Right cardiac atrium (tissue), 5 donors: ENCODE measurements at regions of chr16 and their contacts with region 1.

Region 1: GRCh38 chr16:8674413-8675022 is at the start of gene ABAT:
- DNase-seq: peak; percentile 91 to 97 (median 95)
- ATAC-seq: peak; percentile 100
- H3K4me3 ChIP-seq: peak within 1 kb of the TSS; percentile 79
- H3K27ac ChIP-seq: no peak within 1 kb of the TSS
- H3K4me1 ChIP-seq: no peaks in the 10 kb centered on the region
- H3K27me3 ChIP-seq: no peaks in the 10 kb centered on the region
- total RNA-seq, gene ABAT: 12.3 to 42.4 (median 20.2) TPM

Region 2: GRCh38 chr16:8768692-8769091 is 94.2 kb after region 1 on chr16:
- intact Hi-C with region 1: loop called in 1 of 4 experiments (anchors 10 kb)
- DNase-seq: no peak
- ATAC-seq: no peak
- H3K4me3 ChIP-seq: no peak overlapping the region
- H3K27ac ChIP-seq: no peak overlapping the region
- H3K4me1 ChIP-seq: no peaks in the 10 kb centered on the region
- H3K27me3 ChIP-seq: no peaks in the 10 kb centered on the region